ENCODE measurements at regions of chr1 and their contacts with region 1.

Region 1: GRCh38 chr1:24186993-24187805 is at the start of gene IFNLR1:
- DNase-seq: peak; percentile 57 to 83 (median 69)
- H3K4me3 ChIP-seq: peak within 1 kb of the TSS; percentile 66
- H3K4me3 Mint-ChIP-seq: peak within 1 kb of the TSS; percentile 86 to 95 (median 89)
- H3K27ac ChIP-seq: no peak within 1 kb of the TSS
- H3K27ac Mint-ChIP-seq: peak within 1 kb of the TSS; percentile 59 to 95 (median 90)
- H3K4me1 ChIP-seq: peaks cover 32% of the 10 kb centered on the region
- H3K4me1 Mint-ChIP-seq: peaks cover 55 to 74% (median 56%) of the 10 kb centered on the region in 3 donors
- H3K27me3 ChIP-seq: no peaks in the 10 kb centered on the region
- H3K27me3 Mint-ChIP-seq: peaks cover 0 to 3% of the 10 kb centered on the region in 2 donors
- total RNA-seq, gene IFNLR1: 5.4 to 6.1 TPM

Region 2: GRCh38 chr1:24126018-24126671 is 61.1 kb before region 1 on chr1:
- CTCF ChIA-PET with region 1: no interaction called
- POLR2A ChIA-PET with region 1: no interaction called
- DNase-seq: no peak
- H3K4me3 ChIP-seq: no peak overlapping the region
- H3K4me3 Mint-ChIP-seq: no peak overlapping the region
- H3K27ac ChIP-seq: no peak overlapping the region
- H3K27ac Mint-ChIP-seq: no peak overlapping the region
- H3K4me1 ChIP-seq: no peaks in the 10 kb centered on the region
- H3K4me1 Mint-ChIP-seq: no peaks in the 10 kb centered on the region
- H3K27me3 ChIP-seq: no peaks in the 10 kb centered on the region
- H3K27me3 Mint-ChIP-seq: peaks cover 0 to 2% of the 10 kb centered on the region in 2 donors

Region 3: GRCh38 chr1:24150234-24151174 is 36.7 kb before region 1 on chr1:
- CTCF ChIA-PET with region 1: interaction called, 34 read pairs
- POLR2A ChIA-PET with region 1: no interaction called
- DNase-seq: peak; percentile 69 to 89 (median 80)
- H3K4me3 ChIP-seq: no peak overlapping the region
- H3K4me3 Mint-ChIP-seq: peak overlapping the region in 6 of 7 donors; percentile 59 to 73 (median 62)
- H3K27ac ChIP-seq: no peak overlapping the region
- H3K27ac Mint-ChIP-seq: peak overlapping the region in 3 of 8 donors; percentile 6 to 65 (median 52)
- H3K4me1 ChIP-seq: peaks cover 11% of the 10 kb centered on the region
- H3K4me1 Mint-ChIP-seq: peaks cover 9 to 16% (median 11%) of the 10 kb centered on the region in 3 donors
- H3K27me3 ChIP-seq: peaks cover 7% of the 10 kb centered on the region
- H3K27me3 Mint-ChIP-seq: peaks cover 13 to 39% of the 10 kb centered on the region in 2 donors